B cell (primary cell): ENCODE measurements at regions of chr7 and their contacts with region 1.

Region 1: DNA sequence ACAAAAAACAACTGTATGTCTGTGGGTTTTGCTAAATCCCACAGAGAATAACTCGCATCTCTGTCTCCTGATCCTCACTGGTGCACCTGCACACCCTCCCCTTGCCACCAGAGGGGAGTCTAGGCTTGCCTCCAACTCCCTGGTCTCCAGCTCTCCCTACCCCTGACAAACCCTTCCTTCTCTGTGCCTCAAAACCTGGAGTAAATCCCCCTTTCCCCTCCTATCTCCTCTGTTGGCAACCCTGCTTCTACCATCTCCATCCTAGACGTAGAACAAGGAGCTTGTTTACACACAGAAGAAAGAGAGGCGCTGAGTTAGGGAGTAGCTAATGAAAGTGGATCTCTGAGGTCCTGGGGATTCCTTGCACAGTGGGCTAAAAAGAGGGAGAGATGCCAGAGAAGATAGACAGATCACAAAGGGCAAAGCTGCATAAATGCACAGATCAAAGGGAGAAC is 6.0 kb downstream of the MBLAC1 start:
- DNase-seq: peak; percentile 80
- ATAC-seq: peak; percentile 80
- H3K4me3 ChIP-seq: no peak overlapping the region
- H3K4me3 Mint-ChIP-seq: no peak overlapping the region
- H3K27ac ChIP-seq: no peak overlapping the region
- H3K27ac Mint-ChIP-seq: peak overlapping the region; percentile 0
- H3K4me1 ChIP-seq: peaks cover 12 to 20% of the 10 kb centered on the region in 2 donors
- H3K4me1 Mint-ChIP-seq: peaks cover 15% of the 10 kb centered on the region
- H3K27me3 ChIP-seq: no peaks in the 10 kb centered on the region
- H3K27me3 Mint-ChIP-seq: no peaks in the 10 kb centered on the region
- CTCF ChIP-seq: peak; percentile 90

Region 2: DNA sequence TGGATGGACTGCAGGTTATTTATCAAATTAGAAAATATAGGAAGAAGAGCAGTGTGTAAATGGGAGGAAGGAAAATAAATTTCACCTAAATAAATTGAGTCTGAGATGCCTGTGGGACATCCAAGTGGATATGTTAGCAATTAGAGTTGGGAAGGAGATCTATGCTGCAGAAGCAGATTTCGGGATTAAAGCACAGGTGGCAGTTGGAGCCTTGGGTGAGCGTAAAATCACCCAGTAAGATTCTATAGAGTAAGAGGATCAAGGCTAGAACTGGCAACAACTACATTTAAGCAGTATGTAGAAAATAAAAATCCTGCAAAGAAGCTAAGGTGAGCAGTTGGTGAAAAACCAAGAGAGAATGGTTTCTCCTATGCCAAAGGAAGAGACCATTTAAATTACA is 221.7 kb before region 1 on chr7:
- CTCF ChIA-PET with region 1: interaction called, 26 read pairs
- POLR2A ChIA-PET with region 1: no interaction called
- intact Hi-C with region 1: loop called (anchors 2 kb)
- DNase-seq: no peak
- ATAC-seq: no peak
- H3K4me3 ChIP-seq: no peak overlapping the region
- H3K4me3 Mint-ChIP-seq: no peak overlapping the region
- H3K27ac ChIP-seq: no peak overlapping the region
- H3K27ac Mint-ChIP-seq: no peak overlapping the region
- H3K4me1 ChIP-seq: peaks cover 5 to 6% of the 10 kb centered on the region in 2 donors
- H3K4me1 Mint-ChIP-seq: peaks cover 27% of the 10 kb centered on the region
- H3K27me3 ChIP-seq: no peaks in the 10 kb centered on the region
- H3K27me3 Mint-ChIP-seq: no peaks in the 10 kb centered on the region
- CTCF ChIP-seq: no peak

Region 3: DNA sequence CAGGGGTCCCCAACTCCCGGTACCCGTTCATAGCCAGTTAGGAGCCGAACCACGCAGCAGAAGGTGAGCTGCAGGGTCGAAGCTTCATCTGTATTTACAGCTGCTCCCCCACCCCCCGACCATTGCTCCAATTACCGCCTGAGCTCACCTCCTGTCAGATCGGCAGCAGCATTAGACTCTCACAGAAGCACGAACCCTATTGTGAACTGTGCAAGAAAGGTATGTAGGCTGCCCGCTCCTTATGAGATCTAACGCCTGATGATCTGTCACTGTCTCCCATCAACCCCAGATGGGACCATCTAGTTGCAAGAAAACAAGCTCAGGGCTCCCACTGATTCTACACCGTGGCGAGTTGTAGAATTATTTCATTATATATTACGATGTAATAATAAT is 142.3 kb before region 1 on chr7:
- CTCF ChIA-PET with region 1: interaction called, 8 read pairs
- POLR2A ChIA-PET with region 1: no interaction called
- intact Hi-C with region 1: loop called (anchors 2 kb)
- DNase-seq: no peak
- ATAC-seq: no peak
- H3K4me3 ChIP-seq: no peak overlapping the region
- H3K4me3 Mint-ChIP-seq: no peak overlapping the region
- H3K27ac ChIP-seq: no peak overlapping the region
- H3K27ac Mint-ChIP-seq: no peak overlapping the region
- H3K4me1 ChIP-seq: peaks cover 0 to 4% of the 10 kb centered on the region in 2 donors
- H3K4me1 Mint-ChIP-seq: peaks cover 3% of the 10 kb centered on the region
- H3K27me3 ChIP-seq: peaks cover 0 to 8% (median 0%) of the 10 kb centered on the region in 4 experiments
- H3K27me3 Mint-ChIP-seq: peaks cover 24% of the 10 kb centered on the region
- CTCF ChIP-seq: no peak

Region 4: GRCh38 chr7:100158229-100159098 is 25.7 kb after region 1 on chr7 and contains the start of gene TRAPPC14:
- CTCF ChIA-PET with region 1: interaction called, 18 read pairs
- POLR2A ChIA-PET with region 1: interaction called, 5 read pairs
- intact Hi-C with region 1: no loop called
- DNase-seq: peak; percentile 93
- ATAC-seq: peak; percentile 93
- H3K4me3 ChIP-seq: peak within 1 kb of the TSS; percentile 56 to 95 (median 73)
- H3K4me3 Mint-ChIP-seq: peak within 1 kb of the TSS; percentile 89
- H3K27ac ChIP-seq: peak within 1 kb of the TSS; percentile 68 to 84
- H3K27ac Mint-ChIP-seq: peak within 1 kb of the TSS; percentile 90
- H3K4me1 ChIP-seq: peaks cover 22 to 27% of the 10 kb centered on the region in 2 donors
- H3K4me1 Mint-ChIP-seq: peaks cover 43% of the 10 kb centered on the region
- H3K27me3 ChIP-seq: no peaks in the 10 kb centered on the region
- H3K27me3 Mint-ChIP-seq: no peaks in the 10 kb centered on the region
- CTCF ChIP-seq: no peak
- total RNA-seq, gene TRAPPC14: 71.2 and 75.8 TPM in 2 replicates

Region 5: DNA sequence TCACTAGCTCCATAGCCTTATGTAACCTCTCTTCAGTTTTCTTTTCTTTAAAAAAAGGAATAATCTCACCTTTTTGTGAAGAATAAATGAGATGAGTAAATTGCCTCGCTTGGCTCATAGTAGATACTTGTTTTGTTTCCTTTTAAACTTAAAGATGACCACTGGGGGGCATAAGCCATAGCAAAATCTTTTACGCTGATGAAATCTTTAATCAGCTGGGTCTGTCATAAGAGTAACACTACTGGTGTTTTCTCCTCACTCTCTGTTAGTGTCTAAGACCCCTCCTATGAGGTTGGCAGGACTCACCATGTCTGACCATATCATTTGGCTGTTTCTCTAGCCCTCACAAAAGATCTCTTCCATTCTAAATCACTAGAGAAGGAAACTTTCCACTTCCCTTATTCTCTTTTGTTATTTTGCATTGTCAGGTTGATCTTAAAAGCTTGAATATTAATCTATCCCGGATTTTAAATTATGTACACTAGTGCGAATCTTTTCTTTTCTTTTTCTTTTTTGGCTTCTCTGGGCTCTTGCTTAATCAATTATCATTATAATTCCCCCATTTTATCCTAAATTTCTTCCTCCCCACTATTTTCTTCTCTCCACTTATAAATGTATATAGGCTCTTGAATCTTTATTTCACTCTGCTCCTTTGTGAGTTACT is 57.5 kb after region 1 on chr7:
- CTCF ChIA-PET with region 1: interaction called, 17 read pairs
- POLR2A ChIA-PET with region 1: interaction called, 3 read pairs
- intact Hi-C with region 1: no loop called
- DNase-seq: peak; percentile 74
- ATAC-seq: peak; percentile 50
- H3K4me3 ChIP-seq: no peak overlapping the region
- H3K4me3 Mint-ChIP-seq: peak overlapping the region; percentile 49
- H3K27ac ChIP-seq: peak overlapping the region; percentile 81 to 83
- H3K27ac Mint-ChIP-seq: peak overlapping the region; percentile 93
- H3K4me1 ChIP-seq: peaks cover 52 to 57% of the 10 kb centered on the region in 2 donors
- H3K4me1 Mint-ChIP-seq: peaks cover 54% of the 10 kb centered on the region
- H3K27me3 ChIP-seq: no peaks in the 10 kb centered on the region
- H3K27me3 Mint-ChIP-seq: no peaks in the 10 kb centered on the region
- CTCF ChIP-seq: peak; percentile 74

Region 6: GRCh38 chr7:100271716-100272537 is 139.2 kb after region 1 on chr7:
- CTCF ChIA-PET with region 1: interaction called, 10 read pairs
- POLR2A ChIA-PET with region 1: no interaction called
- intact Hi-C with region 1: no loop called
- DNase-seq: peak; percentile 96
- ATAC-seq: peak; percentile 90
- H3K4me3 ChIP-seq: peak overlapping the region in 4 of 5 experiments; percentile 42 to 63 (median 59)
- H3K4me3 Mint-ChIP-seq: peak overlapping the region; percentile 82
- H3K27ac ChIP-seq: peak overlapping the region in 1 of 2 donors; percentile 46
- H3K27ac Mint-ChIP-seq: peak overlapping the region; percentile 75
- H3K4me1 ChIP-seq: peaks cover 0 to 9% of the 10 kb centered on the region in 2 donors
- H3K4me1 Mint-ChIP-seq: peaks cover 18% of the 10 kb centered on the region
- H3K27me3 ChIP-seq: no peaks in the 10 kb centered on the region
- H3K27me3 Mint-ChIP-seq: no peaks in the 10 kb centered on the region
- CTCF ChIP-seq: peak; percentile 37

Region 7: DNA sequence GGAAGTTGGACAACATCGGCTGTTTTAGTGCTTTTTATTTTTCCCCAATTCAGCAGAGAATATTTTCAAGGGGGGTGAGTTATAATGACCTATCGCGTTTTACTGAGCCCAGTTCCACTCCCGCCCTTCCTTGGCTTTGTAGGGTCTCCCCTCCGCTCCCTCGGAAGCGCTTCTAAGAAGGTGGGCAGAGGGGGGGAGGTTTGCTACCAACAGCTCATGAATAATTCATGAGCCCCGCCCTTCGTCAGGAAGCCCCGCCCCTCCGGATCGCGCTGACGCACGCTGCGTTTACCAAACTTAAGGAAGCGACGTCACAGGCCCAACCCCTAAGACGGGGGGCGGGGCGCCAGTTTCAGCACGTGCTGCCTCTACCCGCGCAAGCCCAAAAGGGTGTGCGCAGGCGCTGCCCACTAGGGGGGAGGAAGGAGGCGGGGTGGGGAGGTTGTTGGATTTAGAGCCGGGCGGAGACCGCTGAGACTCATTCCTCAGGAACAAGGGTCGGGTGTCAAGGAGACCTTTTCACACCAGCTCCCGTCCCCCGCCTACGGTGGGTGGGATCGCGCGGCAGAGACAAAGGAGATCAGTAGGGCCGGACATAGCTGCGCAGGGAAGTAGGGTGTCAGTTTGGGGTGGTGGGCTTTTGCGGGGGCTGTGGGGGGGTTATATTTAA is 296.4 kb after region 1 on chr7:
- CTCF ChIA-PET with region 1: interaction called, 4 read pairs
- POLR2A ChIA-PET with region 1: interaction called, 11 read pairs
- intact Hi-C with region 1: loop called (anchors 1 kb)
- DNase-seq: peak; percentile 100
- ATAC-seq: peak; percentile 59
- H3K4me3 ChIP-seq: peak overlapping the region; percentile 73 to 91 (median 85)
- H3K4me3 Mint-ChIP-seq: peak overlapping the region; percentile 97
- H3K27ac ChIP-seq: peak overlapping the region; percentile 99 to 100
- H3K27ac Mint-ChIP-seq: peak overlapping the region; percentile 100
- H3K4me1 ChIP-seq: peaks cover 24 to 35% of the 10 kb centered on the region in 2 donors
- H3K4me1 Mint-ChIP-seq: peaks cover 41% of the 10 kb centered on the region
- H3K27me3 ChIP-seq: no peaks in the 10 kb centered on the region
- H3K27me3 Mint-ChIP-seq: no peaks in the 10 kb centered on the region
- CTCF ChIP-seq: no peak